H1 (cell line): ENCODE measurements at regions of chr15 and their contacts with region 1.

Region 1: DNA sequence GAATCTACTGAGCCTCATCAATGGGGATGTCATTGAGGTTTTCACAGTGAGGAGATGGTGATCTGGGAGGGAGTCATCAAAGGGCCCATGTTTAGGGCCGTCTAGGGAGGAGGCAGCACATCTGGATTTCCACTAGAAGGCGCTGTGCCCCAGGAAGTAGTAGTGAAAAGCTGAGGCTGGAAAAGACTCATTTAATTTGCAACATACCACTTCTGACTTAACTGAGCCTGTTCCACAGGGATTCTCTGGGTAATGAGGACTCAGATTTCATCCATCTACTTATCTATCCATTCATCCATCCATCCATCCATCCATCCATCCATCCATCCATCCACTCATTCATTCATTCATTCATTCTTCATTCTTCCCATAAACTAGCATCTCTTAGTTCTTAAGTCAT is 17.4 kb upstream of the SHF start:
- DNase-seq: peak in 1 of 2 experiments; percentile 77
- H3K4me3 ChIP-seq: no peak overlapping the region
- H3K27ac ChIP-seq: no peak overlapping the region
- H3K4me1 ChIP-seq: no peaks in the 10 kb centered on the region
- H3K27me3 ChIP-seq: no peaks in the 10 kb centered on the region
- CTCF ChIP-seq: peak; percentile 81 to 97 (median 93)
- EP300 ChIP-seq: no peak
- POLR2A ChIP-seq: no peak
- RAD21 ChIP-seq: peak; percentile 95

Region 2: DNA sequence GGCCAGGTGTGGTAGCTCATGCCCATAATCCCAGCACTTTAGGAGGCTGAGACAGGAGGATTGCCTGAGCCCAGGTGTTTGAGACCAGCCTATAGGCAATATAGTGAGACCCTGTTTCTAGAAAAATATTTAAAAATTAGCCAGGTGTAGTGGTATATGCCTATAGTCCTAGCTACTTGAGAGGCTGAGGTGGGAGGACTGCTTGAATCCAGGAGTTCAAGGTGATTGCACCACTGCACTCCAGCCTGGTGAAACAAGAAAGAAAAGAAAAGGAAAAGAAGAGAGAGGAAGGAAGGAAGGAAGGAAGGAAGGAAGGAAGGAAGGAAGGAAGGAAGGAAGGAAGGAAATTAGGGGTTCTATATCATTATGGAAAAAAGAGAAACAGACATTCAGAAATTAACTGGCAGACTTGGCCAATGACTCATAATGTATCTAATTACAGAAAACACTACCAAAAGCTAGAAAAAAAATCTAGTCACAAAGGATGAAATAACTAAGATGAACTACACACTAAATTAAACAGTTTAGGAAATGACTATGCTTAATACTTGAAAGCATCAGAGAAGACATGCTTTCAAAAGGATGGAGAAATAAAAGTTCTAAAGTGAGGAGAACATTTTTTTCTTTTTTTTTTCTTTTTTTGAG is 294.1 kb before region 1 on chr15:
- CTCF ChIA-PET with region 1: no interaction called
- POLR2A ChIA-PET with region 1: no interaction called
- DNase-seq: no peak
- H3K4me3 ChIP-seq: no peak overlapping the region
- H3K27ac ChIP-seq: no peak overlapping the region
- H3K4me1 ChIP-seq: no peaks in the 10 kb centered on the region
- H3K27me3 ChIP-seq: no peaks in the 10 kb centered on the region
- CTCF ChIP-seq: no peak
- EP300 ChIP-seq: no peak
- POLR2A ChIP-seq: no peak
- RAD21 ChIP-seq: no peak

Region 3: DNA sequence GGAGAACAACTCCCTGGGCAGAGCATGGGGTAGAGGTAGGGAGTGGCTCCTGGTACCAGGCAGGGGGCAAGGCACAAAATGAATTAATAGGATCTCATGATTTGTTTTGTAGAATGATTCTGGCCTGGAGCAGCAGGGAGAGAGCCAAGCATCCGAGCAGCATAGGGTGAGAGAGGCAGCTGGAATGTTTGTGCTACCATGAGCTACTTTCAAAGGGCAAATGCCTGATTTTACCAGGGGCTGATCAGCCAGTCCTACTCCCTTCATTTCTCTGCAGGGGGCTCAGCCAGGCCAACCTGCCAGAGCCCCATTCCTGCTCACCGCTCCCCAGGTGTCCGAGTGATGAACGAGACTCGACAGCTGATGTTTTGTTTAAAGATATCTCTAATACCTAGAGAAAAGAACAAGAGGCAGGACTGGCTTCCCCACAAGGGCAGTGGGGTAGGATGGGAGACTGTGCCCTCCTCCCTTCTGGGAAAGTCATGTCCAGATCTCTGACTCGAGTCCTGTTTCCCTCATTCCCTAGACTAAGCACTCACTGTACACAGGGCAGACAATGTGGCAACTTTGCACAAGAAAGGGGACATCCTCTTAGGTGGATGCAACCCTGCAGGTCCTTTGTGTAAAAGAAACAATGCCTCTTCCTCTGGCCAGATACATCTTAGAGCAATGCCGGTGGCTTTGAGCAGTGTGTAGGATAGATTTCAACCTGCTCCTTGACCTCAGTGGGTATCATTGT is 104.1 kb before region 1 on chr15:
- CTCF ChIA-PET with region 1: no interaction called
- POLR2A ChIA-PET with region 1: no interaction called
- DNase-seq: no peak
- H3K4me3 ChIP-seq: no peak overlapping the region
- H3K27ac ChIP-seq: no peak overlapping the region
- H3K4me1 ChIP-seq: peaks cover 0 to 11% (median 8%) of the 10 kb centered on the region in 4 experiments; a peak in 5 of 7 replicates
- H3K27me3 ChIP-seq: peaks cover 0 to 5% (median 4%) of the 10 kb centered on the region in 4 experiments; a peak in 1 of 7 replicates
- CTCF ChIP-seq: no peak
- EP300 ChIP-seq: no peak
- POLR2A ChIP-seq: no peak
- RAD21 ChIP-seq: no peak

Region 4: DNA sequence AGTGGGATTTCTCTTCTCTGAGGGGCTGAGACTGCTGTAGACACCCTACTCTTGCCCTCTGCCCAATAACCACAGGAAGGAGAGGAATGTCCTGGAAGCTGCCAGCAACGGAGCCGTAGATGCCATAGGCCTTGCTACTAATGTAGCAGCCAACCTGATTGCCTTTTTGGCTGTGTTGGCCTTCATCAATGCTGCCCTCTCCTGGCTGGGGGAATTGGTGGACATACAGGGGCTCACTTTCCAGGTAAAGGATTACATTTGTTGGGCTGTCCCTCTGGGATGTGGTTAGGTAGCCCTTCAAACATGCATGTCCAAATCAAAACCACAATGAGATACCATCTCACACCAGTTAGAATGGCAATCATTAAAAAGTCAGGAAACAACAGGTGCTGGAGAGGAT is 62.9 kb after region 1 on chr15:
- CTCF ChIA-PET with region 1: interaction called, 19 read pairs
- POLR2A ChIA-PET with region 1: no interaction called
- DNase-seq: peak in 1 of 2 experiments; percentile 50
- H3K4me3 ChIP-seq: no peak overlapping the region
- H3K27ac ChIP-seq: no peak overlapping the region
- H3K4me1 ChIP-seq: no peaks in the 10 kb centered on the region
- H3K27me3 ChIP-seq: no peaks in the 10 kb centered on the region
- CTCF ChIP-seq: peak; percentile 65 to 73 (median 69)
- EP300 ChIP-seq: no peak
- POLR2A ChIP-seq: no peak
- RAD21 ChIP-seq: peak; percentile 64 to 70

Region 5: DNA sequence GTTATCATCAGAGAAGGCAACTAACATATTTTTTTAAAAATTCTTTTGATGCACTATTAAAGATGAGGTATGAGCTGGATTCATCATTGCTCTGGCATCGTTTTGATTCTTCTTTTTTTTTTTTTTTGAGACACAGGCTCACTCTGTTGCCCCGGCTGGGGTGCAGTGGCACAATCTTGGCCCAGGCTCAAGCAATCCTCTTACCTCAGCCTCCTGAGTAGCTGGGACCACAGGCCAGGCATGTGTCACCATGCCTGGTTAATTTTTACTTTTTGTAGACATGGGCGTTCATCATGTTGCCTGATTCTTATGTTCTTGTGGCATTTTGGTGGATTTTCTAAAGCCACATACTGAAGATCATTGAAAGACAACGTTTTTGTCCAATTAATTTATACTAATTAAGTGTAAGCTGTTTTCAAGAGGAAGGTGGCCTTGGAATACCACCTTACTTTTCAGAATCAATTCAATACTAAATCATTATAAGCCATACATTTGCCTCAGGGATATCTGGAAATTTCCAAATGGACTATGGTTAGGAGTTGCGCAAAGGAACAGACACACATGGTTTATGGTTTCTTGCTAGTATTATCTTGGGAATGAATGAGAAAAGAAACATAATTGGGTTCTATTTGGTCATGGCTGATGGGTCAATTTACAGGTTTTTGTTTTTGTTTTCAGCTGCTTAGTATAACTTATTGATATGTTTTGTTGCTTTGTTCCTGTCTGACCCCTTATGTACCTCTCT is 69.6 kb after region 1 on chr15:
- CTCF ChIA-PET with region 1: interaction called, 14 read pairs
- POLR2A ChIA-PET with region 1: no interaction called
- DNase-seq: no peak
- H3K4me3 ChIP-seq: no peak overlapping the region
- H3K27ac ChIP-seq: no peak overlapping the region
- H3K4me1 ChIP-seq: no peaks in the 10 kb centered on the region; a peak in 1 of 7 replicates
- H3K27me3 ChIP-seq: no peaks in the 10 kb centered on the region
- CTCF ChIP-seq: no peak
- EP300 ChIP-seq: no peak
- POLR2A ChIP-seq: no peak
- RAD21 ChIP-seq: no peak

Region 6: DNA sequence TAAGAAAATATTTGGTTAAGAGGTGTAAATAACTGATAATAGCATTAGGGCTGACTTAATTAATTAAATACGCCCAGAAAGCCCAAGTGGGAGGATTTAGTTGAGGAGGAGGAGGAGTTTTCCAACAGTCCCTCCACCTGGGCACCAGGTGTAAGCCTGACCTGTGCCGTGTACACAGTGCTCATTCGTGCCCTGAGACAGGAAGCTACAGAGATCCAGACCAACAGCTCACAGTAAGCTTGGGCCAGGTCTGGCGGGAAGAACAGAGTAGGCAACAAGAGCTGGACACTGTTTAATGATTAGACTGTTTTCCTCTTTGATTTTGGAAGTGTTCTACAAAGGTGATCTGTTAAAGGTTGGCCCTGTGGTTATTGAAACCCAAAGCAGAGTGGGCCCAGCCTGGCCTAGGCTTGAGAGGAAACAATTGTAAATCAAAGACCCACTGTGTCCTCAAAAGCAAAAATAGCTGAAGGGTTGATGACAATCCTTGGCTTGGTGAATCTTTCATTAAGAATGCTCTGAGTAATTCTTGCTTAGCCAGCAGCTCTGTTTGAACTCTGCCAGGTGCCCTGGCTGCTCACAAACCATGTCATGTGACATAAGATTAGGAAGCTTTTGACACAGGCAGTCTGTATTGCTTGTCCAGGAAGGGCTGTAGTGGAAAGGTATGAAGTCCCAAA is 443.5 kb after region 1 on chr15:
- CTCF ChIA-PET with region 1: no interaction called
- POLR2A ChIA-PET with region 1: no interaction called
- DNase-seq: no peak
- H3K4me3 ChIP-seq: no peak overlapping the region
- H3K27ac ChIP-seq: no peak overlapping the region
- H3K4me1 ChIP-seq: no peaks in the 10 kb centered on the region
- H3K27me3 ChIP-seq: no peaks in the 10 kb centered on the region
- CTCF ChIP-seq: no peak
- EP300 ChIP-seq: no peak
- POLR2A ChIP-seq: no peak
- RAD21 ChIP-seq: no peak